ENCODE measurements at regions of chr3 and their contacts with region 1.

Region 1: GRCh38 chr3:189148081-189148507 is 23.7 kb upstream of the TPRG1 start:
- DNase-seq: peak; percentile 46 to 67 (median 57)
- H3K4me3 ChIP-seq: no peak overlapping the region
- H3K4me3 Mint-ChIP-seq: no peak overlapping the region
- H3K27ac ChIP-seq: no peak overlapping the region
- H3K27ac Mint-ChIP-seq: no peak overlapping the region
- H3K4me1 ChIP-seq: peaks cover 16 to 21% of the 10 kb centered on the region in 2 donors
- H3K4me1 Mint-ChIP-seq: peaks cover 25% of the 10 kb centered on the region
- H3K27me3 ChIP-seq: no peaks in the 10 kb centered on the region
- H3K27me3 Mint-ChIP-seq: peaks cover 3 to 6% (median 5%) of the 10 kb centered on the region in 3 donors
- CTCF ChIP-seq: peak; percentile 79

Region 2: DNA sequence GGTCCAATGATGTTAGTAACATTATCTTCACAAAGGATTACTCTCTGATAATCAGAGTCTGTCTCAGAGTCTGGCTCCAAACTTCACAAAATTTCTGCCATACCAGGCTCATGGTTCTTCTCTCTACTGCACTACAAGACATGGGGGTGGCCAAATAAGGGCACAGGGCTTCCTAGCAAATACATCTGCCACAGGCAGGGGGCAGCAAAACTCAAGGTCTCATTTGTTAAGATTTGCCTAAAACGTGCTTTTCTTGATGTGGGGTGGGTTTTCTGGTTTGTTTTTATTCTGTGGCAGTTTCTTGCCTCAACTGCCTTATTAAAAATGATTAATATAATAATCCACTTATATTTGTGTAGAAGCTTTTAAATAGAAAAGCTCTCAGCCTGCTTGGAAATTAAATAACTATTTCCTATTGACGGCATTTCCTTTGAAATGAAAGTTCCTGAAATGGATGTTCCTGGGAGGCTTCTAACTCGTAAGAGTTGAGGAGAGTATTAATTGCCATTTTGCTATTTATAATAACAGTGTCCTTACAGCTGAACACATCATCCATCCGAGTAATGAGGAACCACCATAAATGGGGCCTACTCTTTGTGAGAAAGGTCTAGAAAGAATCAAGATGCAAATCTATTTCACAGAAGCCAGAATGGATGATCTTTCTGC is 1531.7 kb before region 1 on chr3:
- intact Hi-C with region 1: loop called in 1 of 2 experiments (anchors 5 kb)
- DNase-seq: peak; percentile 23 to 52 (median 35)
- H3K4me3 ChIP-seq: no peak overlapping the region
- H3K4me3 Mint-ChIP-seq: no peak overlapping the region
- H3K27ac ChIP-seq: no peak overlapping the region
- H3K27ac Mint-ChIP-seq: no peak overlapping the region
- H3K4me1 ChIP-seq: no peaks in the 10 kb centered on the region
- H3K4me1 Mint-ChIP-seq: no peaks in the 10 kb centered on the region
- H3K27me3 ChIP-seq: peaks cover 0 to 2% of the 10 kb centered on the region in 2 donors
- H3K27me3 Mint-ChIP-seq: peaks cover 2 to 6% (median 3%) of the 10 kb centered on the region in 3 donors
- CTCF ChIP-seq: peak; percentile 87

Region 3: GRCh38 chr3:188749010-188749617 is 399.0 kb before region 1 on chr3:
- intact Hi-C with region 1: no loop called
- DNase-seq: peak; percentile 25 to 58 (median 40)
- H3K4me3 ChIP-seq: no peak overlapping the region
- H3K4me3 Mint-ChIP-seq: no peak overlapping the region
- H3K27ac ChIP-seq: no peak overlapping the region
- H3K27ac Mint-ChIP-seq: peak overlapping the region in 1 of 7 donors; percentile 34
- H3K4me1 ChIP-seq: no peaks in the 10 kb centered on the region
- H3K4me1 Mint-ChIP-seq: peaks cover 15% of the 10 kb centered on the region
- H3K27me3 ChIP-seq: no peaks in the 10 kb centered on the region
- H3K27me3 Mint-ChIP-seq: peaks cover 0 to 2% (median 0%) of the 10 kb centered on the region in 3 donors
- CTCF ChIP-seq: peak; percentile 79

Measured in CD14-positive monocyte (primary cell).